Common myeloid progenitor, CD34-positive (primary cell): ENCODE measurements at regions of chr16 and their contacts with region 1.

Region 1: GRCh38 chr16:81216706-81217105 is 21.8 kb upstream of the BCO1 start:
- DNase-seq: no peak
- H3K4me3 ChIP-seq: no peak overlapping the region
- H3K27ac ChIP-seq: no peak overlapping the region
- H3K4me1 ChIP-seq: no peaks in the 10 kb centered on the region
- H3K27me3 ChIP-seq: peaks cover 0 to 27% (median 7%) of the 10 kb centered on the region in 5 experiments

Region 2: GRCh38 chr16:81190667-81191066 is 26.0 kb before region 1 on chr16:
- CTCF ChIA-PET with region 1: no interaction called
- POLR2A ChIA-PET with region 1: no interaction called
- DNase-seq: peak in 1 of 3 donors; percentile 15
- H3K4me3 ChIP-seq: no peak overlapping the region
- H3K27ac ChIP-seq: no peak overlapping the region
- H3K4me1 ChIP-seq: no peaks in the 10 kb centered on the region
- H3K27me3 ChIP-seq: peaks cover 0 to 10% (median 0%) of the 10 kb centered on the region in 5 experiments

Region 3: GRCh38 chr16:81204798-81205680 is 11.7 kb before region 1 on chr16:
- CTCF ChIA-PET with region 1: interaction called, 11 read pairs
- POLR2A ChIA-PET with region 1: no interaction called
- DNase-seq: peak; percentile 53 to 65 (median 62)
- H3K4me3 ChIP-seq: no peak overlapping the region
- H3K27ac ChIP-seq: no peak overlapping the region
- H3K4me1 ChIP-seq: no peaks in the 10 kb centered on the region
- H3K27me3 ChIP-seq: peaks cover 0 to 8% (median 4%) of the 10 kb centered on the region in 5 experiments

Region 4: GRCh38 chr16:81251871-81252270 is 35.2 kb after region 1 on chr16:
- CTCF ChIA-PET with region 1: no interaction called
- POLR2A ChIA-PET with region 1: no interaction called
- DNase-seq: no peak
- H3K4me3 ChIP-seq: no peak overlapping the region
- H3K27ac ChIP-seq: no peak overlapping the region
- H3K4me1 ChIP-seq: no peaks in the 10 kb centered on the region
- H3K27me3 ChIP-seq: peaks cover 0 to 2% (median 0%) of the 10 kb centered on the region in 5 experiments